Activated T-helper 2 cell treated with anti-CD3 and anti-CD28 coated beads, Interferon-gamma antibody, Interleukin-2, Interleukin-4, amounts not matched to agents 10 μg/mL and 5 μg/mL and 100 μg/mL, durations not matched to agents 14 hours and 24 hours and 36 hours (primary cell): ENCODE measurements at regions of chr17 and their contacts with region 1.

Region 1: GRCh38 chr17:7614422-7615264 is at the start of gene FXR2:
- DNase-seq: peak; percentile 99
- H3K4me3 Mint-ChIP-seq: peak within 1 kb of the TSS; percentile 89
- H3K27ac Mint-ChIP-seq: peak within 1 kb of the TSS; percentile 84
- H3K4me1 Mint-ChIP-seq: peaks cover 22% of the 10 kb centered on the region
- H3K27me3 Mint-ChIP-seq: no peaks in the 10 kb centered on the region
- total RNA-seq, gene FXR2: 59.0 and 63.1 TPM in 2 replicates

Region 2: DNA sequence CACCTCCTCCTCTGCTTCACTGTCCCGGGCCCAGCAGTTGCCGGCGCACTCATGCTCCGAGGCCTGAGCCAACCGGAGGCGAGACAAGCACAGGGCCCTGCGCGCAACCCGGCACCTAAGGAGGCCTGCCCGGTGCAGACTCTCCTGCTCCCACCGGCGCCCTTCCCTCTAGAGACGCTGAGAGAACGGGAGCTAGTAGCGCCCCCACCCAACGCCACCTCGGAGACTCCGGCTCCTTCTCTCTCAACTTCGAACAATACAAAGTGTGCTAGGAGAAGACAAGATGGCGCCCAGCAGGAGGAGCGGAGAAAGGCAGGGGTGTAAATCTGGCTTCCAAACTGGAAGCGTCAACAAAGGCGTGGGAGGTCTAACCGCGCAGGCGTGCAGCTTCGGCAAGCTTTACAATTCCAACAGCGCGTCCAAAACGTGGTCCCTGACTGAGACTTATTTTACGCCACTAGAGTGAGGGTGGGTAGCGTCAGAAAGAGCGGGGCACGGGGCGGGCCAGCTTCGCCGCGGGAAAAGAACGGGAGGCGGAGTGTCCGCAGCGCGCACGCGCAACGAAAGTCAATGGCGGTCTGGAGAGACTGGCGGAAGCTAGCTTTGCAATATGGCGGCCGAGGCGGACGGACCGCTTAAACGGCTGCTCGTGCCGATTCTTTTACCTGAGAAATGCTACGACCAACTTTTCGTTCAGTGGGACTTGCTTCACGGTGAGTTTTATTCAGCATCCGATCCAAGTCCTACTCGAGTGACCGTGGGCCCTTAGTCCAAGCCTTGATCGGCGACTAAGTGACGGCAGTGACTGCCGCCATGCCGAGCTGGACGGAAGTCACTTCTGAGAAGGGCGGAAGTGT is 31.2 kb before region 1 on chr17 and contains the start of gene MPDU1:
- intact Hi-C with region 1: loop called (anchors 2 kb)
- DNase-seq: peak; percentile 97
- H3K4me3 Mint-ChIP-seq: peak within 1 kb of the TSS; percentile 95
- H3K27ac Mint-ChIP-seq: peak within 1 kb of the TSS; percentile 100
- H3K4me1 Mint-ChIP-seq: peaks cover 43% of the 10 kb centered on the region
- H3K27me3 Mint-ChIP-seq: no peaks in the 10 kb centered on the region
- total RNA-seq, gene MPDU1: 98.6 and 106 TPM in 2 replicates